ENCODE measurements at regions of chr9 and their contacts with region 1.

Region 1: GRCh38 chr9:32550562-32551433 is 1.3 kb upstream of the SMIM27 start:
- DNase-seq: peak; percentile 98
- ATAC-seq: peak; percentile 90
- H3K4me3 Mint-ChIP-seq: peak overlapping the region; percentile 91
- H3K27ac Mint-ChIP-seq: peak overlapping the region; percentile 98
- H3K4me1 Mint-ChIP-seq: peaks cover 24% of the 10 kb centered on the region
- H3K27me3 Mint-ChIP-seq: no peaks in the 10 kb centered on the region
- CTCF ChIP-seq: no peak

Region 2: DNA sequence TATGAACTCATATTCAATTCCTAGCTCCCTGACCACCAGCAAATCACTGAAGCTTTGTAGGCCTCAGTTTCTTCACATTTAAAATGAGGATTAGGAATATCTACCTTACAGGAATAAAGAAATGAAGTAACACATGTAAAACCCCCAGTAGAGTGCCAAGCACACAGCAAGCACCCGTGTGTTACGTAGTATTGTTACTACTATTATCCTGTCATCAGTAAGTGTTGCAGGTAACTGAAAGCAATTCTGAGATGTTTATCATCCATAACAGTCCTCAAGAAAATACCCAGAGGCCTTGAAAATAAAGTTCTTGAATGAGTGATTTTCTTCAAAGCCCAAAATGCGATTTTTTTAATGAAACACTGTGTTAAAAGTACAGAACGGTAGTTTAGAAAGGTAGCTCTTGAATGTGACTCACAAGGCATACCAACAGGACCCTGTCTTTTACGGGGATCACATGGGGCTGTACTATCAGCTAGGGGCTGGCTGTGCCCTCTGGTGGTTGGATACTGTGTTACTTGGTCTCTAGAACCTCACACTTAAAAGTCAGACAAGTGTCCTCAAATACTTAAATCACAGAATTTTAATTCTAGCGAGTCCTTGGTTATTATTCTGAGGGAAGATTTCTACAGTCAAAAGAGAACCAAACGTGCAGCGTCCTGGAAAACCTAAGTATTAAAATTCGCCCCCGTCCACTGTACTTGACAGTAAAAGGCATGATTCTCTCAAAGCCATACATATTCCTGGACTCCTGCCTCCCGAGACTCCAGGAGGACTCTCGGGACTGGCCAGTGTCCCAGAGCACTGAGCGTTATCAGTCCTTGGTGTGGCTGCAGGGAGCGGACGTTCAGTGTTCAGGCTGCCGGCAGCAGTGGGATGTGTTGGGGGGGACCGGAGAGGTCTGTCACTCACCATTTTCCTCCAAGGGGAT is 21.4 kb after region 1 on chr9:
- CTCF ChIA-PET with region 1: interaction called, 12 read pairs
- POLR2A ChIA-PET with region 1: interaction called, 11 read pairs
- DNase-seq: peak; percentile 68
- ATAC-seq: peak; percentile 89
- H3K4me3 Mint-ChIP-seq: peak overlapping the region; percentile 99
- H3K27ac Mint-ChIP-seq: peak overlapping the region; percentile 99
- H3K4me1 Mint-ChIP-seq: peaks cover 11% of the 10 kb centered on the region
- H3K27me3 Mint-ChIP-seq: no peaks in the 10 kb centered on the region
- CTCF ChIP-seq: peak; percentile 18; the same call in 1 of the 2 replicates

Measured in WTC11 (cell line).